ENCODE measurements at regions of chr10 and their contacts with region 1.

Region 1: GRCh38 chr10:103888113-103888841 is 29.7 kb downstream of the STN1 start:
- DNase-seq: no peak
- H3K4me3 ChIP-seq: no peak overlapping the region
- CTCF ChIP-seq: peak; percentile 69

Region 2: GRCh38 chr10:103451831-103452505 is 436.3 kb before region 1 on chr10 and contains the start of gene CALHM2:
- CTCF ChIA-PET with region 1: no interaction called
- POLR2A ChIA-PET with region 1: no interaction called
- DNase-seq: no peak
- H3K4me3 ChIP-seq: peak within 1 kb of the TSS; percentile 77
- CTCF ChIP-seq: no peak

Region 3: GRCh38 chr10:103578782-103579382 is 309.4 kb before region 1 on chr10:
- CTCF ChIA-PET with region 1: no interaction called
- POLR2A ChIA-PET with region 1: no interaction called
- DNase-seq: no peak
- H3K4me3 ChIP-seq: no peak overlapping the region
- CTCF ChIP-seq: no peak

Region 4: GRCh38 chr10:103637927-103638557 is 250.2 kb before region 1 on chr10:
- CTCF ChIA-PET with region 1: no interaction called
- POLR2A ChIA-PET with region 1: no interaction called
- DNase-seq: no peak
- H3K4me3 ChIP-seq: no peak overlapping the region
- CTCF ChIP-seq: no peak

Region 5: DNA sequence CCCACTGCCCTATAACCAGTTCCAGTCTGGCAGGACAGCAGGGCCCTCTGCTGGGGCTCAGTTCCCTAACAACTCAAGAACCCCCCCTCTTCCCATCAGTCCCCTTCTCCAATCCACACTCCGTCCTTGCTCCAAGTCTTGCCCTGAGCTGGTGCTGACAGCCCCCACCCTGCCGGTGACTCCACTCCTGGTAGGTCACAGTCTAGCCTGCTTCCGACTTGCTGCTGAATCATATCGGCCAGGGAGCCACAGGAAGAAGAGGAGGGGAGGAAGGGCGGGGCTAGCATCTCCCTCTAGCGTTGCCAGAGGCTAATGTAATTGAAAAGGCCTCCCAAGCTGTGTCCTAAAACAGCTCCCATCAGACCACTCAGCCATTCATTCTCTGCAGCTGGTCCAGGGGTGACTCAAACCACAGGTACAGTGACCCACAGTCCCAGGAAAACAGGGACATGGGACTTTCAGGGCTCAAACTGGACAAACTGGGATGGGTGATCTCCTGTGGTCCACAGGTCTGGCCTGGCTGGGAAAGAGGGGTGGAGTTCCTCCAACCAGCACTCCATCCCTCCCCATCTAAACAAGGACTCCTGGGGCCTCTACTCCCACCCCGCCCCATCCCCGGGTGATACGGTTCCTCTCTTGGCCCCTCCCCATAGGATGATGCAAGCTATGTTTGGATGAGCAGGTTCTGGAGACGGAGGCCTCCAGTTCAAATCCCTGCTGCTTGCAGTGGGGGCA is 191.7 kb before region 1 on chr10:
- CTCF ChIA-PET with region 1: interaction called, 27 read pairs
- POLR2A ChIA-PET with region 1: no interaction called
- DNase-seq: peak; percentile 75
- H3K4me3 ChIP-seq: no peak overlapping the region
- CTCF ChIP-seq: peak; percentile 68

Region 6: GRCh38 chr10:103733045-103733419 is 155.2 kb before region 1 on chr10:
- CTCF ChIA-PET with region 1: interaction called, 14 read pairs
- POLR2A ChIA-PET with region 1: no interaction called
- DNase-seq: no peak
- H3K4me3 ChIP-seq: no peak overlapping the region
- CTCF ChIP-seq: no peak

Region 7: DNA sequence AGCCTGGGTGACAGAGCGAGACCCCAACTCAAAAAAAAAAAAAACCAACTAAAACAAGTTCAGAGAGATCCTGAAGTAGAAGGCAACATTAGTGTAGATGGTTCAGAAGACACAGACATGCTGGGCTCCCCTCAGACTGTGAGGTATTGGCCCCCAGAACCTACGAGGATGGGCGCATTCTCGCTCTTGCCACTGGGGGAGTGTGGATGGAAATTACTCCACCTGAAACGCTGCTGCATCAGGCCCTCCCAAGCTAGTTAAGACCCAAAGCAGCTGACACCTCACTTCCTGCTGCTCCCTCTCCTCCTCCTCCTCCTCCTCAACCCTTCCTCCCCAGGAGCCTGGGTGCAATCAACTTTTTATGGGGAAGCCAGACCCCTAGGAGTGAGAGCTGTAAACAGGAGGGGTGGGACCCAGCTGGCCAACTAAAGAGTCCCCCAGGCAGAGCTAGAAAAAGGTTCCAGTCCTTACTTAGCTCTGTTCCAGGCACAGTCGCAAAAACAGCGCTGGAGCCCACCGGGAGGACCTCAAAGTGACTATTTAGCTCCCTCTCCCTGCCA is 40.3 kb before region 1 on chr10:
- CTCF ChIA-PET with region 1: interaction called, 16 read pairs
- POLR2A ChIA-PET with region 1: no interaction called
- DNase-seq: no peak
- H3K4me3 ChIP-seq: no peak overlapping the region
- CTCF ChIP-seq: peak; percentile 36

Region 8: DNA sequence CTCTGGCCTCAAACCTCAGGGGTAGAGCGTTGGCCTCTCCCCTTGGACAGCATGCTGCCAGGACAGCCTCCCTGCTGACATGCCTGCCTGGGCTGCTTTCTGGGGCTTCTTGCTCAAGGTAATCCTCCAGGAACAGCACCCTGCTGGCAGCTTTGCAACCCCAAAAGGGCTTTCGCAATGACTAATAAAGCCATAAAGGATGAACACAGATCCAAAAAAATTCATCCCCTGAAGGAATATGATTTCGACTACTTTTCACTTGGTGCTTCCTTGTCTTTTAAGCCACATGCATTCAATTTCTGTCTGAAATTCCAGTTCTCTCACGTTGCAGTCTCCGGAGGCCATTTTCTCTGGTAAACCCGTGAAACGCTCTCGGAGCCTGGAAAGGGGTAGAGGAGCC is 17.8 kb before region 1 on chr10:
- CTCF ChIA-PET with region 1: interaction called, 95 read pairs
- POLR2A ChIA-PET with region 1: no interaction called
- DNase-seq: no peak
- H3K4me3 ChIP-seq: no peak overlapping the region
- CTCF ChIP-seq: peak; percentile 3

Region 9: GRCh38 chr10:103968441-103969391 is 80.4 kb after region 1 on chr10:
- CTCF ChIA-PET with region 1: no interaction called
- POLR2A ChIA-PET with region 1: no interaction called
- DNase-seq: no peak
- H3K4me3 ChIP-seq: peak overlapping the region; percentile 85
- CTCF ChIP-seq: no peak

Region 10: GRCh38 chr10:104121520-104122224 is 233.4 kb after region 1 on chr10 and contains the start of gene SFR1:
- CTCF ChIA-PET with region 1: interaction called, 97 read pairs
- POLR2A ChIA-PET with region 1: interaction called, 6 read pairs
- DNase-seq: peak; percentile 71
- H3K4me3 ChIP-seq: peak within 1 kb of the TSS; percentile 86
- CTCF ChIP-seq: peak; percentile 81

Region 11: DNA sequence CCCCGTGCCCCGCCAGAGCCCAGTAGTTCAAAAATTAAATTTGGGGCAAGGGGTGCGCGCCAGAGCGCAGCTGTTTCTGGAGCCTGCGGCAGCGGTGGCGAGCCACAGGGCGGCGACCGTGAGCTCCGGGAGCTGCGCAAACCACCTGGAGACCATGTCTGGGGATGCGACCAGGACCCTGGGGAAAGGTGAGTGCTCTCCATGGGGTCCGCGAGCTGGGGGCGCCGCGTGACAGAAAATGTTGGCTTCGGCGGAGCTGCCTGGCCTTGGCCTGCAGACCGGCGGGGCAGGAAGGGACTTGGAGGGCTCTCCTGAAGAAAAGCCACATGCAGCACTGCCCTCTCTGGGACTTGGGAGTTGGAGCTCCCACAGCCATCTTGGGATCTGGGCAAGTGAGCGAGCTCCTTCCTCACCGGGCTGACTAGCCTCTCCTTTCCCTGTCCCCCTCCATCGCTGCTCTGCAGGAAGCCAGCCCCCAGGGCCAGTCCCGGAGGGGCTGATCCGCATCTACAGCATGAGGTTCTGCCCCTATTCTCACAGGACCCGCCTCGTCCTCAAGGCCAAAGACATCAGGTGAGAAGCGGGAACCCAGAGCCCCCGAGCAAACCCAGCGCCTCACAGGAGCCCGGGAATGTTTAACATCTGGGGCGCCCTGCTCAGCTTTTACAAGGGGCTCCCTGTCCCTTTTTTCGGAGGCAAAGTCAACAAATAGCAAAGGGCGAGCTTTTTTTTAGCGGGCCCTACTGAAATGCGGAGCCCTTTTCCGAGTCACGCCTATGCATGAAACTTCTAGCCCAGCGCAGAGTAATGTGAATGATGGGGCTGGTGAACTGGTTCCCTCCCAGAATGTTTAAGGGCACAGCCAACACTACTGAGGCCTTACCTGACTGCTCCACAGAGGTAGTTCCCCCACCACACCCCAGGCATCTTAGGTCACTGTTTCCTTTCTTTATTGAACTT is 386.8 kb after region 1 on chr10:
- CTCF ChIA-PET with region 1: interaction called, 15 read pairs
- POLR2A ChIA-PET with region 1: no interaction called
- DNase-seq: no peak
- H3K4me3 ChIP-seq: peak overlapping the region; percentile 41
- CTCF ChIP-seq: peak; percentile 92